Spleen (tissue), 13 donors: ENCODE measurements at regions of chr11 and their contacts with region 1.

Region 1: DNA sequence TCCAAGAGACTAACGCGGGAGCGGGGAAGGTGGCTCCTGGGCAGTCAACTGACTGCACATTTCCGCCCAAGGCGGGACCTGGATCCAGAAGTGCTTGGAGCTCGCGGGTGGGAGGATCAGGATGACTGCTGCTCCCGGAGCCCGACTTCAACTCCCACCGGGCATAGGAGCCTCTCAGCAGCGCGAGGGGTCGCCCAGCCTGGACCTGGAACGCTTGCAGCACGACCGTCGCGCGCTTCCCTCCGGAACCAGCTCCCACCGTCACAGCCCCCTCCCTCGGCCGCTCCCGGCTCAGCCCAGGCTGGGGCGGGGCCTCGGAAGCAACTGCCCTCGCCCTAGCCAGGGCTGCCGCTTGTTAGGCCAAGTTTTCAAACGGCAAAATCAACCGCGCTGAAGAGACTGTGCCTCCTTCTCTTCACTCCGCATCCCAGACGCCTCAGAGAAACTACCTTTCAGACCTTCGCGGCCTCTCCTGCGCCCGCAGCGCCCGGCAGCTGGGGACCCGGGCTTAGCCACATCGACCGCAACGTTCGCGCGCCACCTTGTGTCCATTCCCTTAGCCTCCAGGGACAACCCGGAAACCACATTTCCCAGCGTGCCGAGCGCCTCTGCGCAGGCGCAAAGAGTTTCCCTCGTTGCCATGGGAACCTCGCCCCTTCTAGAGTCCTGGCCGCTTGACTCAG is 14.0 kb downstream of the SSH3 start:
- DNase-seq: peak; percentile 99
- H3K4me3 ChIP-seq: peak overlapping the region; percentile 63 to 97 (median 92)
- H3K27ac ChIP-seq: peak overlapping the region; percentile 84 to 97 (median 94)
- H3K4me1 ChIP-seq: peaks cover 11 to 57% (median 30%) of the 10 kb centered on the region in 6 donors
- H3K27me3 ChIP-seq: no peaks in the 10 kb centered on the region
- CTCF ChIP-seq: peak; percentile 90 to 100 (median 99)
- POLR2A ChIP-seq: peak in 2 of 3 donors; percentile 14 to 16

Region 2: GRCh38 chr11:67248653-67249052 is 68.7 kb before region 1 on chr11:
- intact Hi-C with region 1: no loop called
- DNase-seq: no peak
- H3K4me3 ChIP-seq: no peak overlapping the region
- H3K27ac ChIP-seq: peak overlapping the region in 2 of 8 donors; percentile 7 to 59
- H3K4me1 ChIP-seq: peaks cover 4 to 76% (median 24%) of the 10 kb centered on the region in 6 donors
- H3K27me3 ChIP-seq: no peaks in the 10 kb centered on the region
- CTCF ChIP-seq: no peak
- POLR2A ChIP-seq: no peak

Region 3: DNA sequence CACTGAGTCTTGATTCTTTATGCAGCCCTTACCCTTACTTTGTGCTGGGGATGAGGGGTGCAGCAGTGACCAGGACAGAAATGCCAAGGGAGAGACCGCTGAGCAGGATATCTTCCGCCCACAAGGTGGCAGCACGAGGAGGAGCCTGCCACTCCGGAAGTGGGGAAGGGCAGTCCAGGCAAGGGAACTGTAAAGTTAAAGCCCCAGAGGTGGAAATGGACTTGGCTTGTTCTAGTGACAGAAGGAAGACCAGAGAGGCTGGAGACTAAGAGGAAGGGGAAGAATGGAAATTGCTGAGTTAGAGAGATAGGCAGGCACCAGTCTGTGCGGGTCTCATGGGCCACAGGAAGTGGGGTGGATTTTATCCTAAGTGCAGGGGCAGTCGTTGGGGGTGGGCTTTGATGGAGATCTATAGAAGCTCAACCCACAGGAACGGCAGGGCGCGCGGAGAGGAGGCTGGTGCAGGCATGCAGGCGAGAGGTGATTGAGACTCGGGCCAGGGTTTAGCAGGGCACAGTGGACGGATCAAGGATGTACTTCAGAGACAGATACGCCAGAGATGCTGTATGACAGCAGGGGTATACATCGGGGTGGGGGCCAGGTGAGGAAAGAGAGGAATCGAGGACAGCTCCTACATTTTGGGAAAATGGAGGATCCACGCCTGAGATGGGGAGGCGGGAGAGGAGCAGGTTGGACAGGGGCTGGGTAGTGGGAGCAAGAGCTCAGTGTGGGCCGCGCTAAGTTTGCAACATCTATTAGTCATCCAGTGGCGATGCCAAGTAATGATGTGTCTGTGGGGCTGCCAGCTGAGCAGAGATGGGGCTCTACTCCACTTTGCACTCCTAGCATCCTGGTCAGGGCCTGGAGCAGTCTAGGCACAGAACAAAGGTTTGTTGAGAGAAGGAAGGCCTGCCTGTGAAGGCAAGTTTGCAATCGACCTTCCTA is 54.3 kb before region 1 on chr11:
- intact Hi-C with region 1: loop called (anchors 2 kb)
- DNase-seq: peak; percentile 93
- H3K4me3 ChIP-seq: peak overlapping the region in 1 of 8 donors; percentile 44
- H3K27ac ChIP-seq: peak overlapping the region in 7 of 8 donors; percentile 15 to 82 (median 69)
- H3K4me1 ChIP-seq: peaks cover 27 to 62% (median 45%) of the 10 kb centered on the region in 6 donors
- H3K27me3 ChIP-seq: peaks cover 0 to 13% (median 0%) of the 10 kb centered on the region in 7 donors
- CTCF ChIP-seq: peak; percentile 79 to 95 (median 90)
- POLR2A ChIP-seq: no peak